ENCODE measurements at regions of chr4 and their contacts with region 1.

Region 1: DNA sequence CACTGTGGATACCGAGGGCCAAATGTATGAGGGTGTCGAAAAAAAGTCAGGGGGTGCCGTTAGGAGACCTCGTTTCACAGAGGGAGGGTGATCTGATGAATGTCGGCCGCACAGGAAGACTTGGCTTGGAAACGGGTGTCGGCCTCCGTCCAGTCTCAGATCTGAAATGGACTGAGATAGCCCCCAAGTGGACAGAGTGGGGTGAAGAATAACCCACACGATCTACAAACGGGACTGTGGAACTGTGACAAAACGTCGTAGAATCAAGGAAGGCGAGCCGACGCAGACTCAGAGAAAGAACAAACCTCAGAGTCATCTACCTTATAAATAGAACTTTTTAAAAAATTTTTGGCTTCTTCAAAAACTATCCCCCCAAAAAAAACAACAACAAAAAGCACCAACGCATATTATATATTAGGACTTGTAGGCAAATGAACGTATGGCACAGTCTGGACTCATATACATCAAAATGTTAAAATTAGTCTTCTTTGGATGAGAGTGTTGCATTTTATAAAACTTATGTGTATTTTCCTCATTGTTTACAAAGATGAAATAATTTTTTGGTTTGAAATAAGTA is 63.8 kb upstream of the IRF2 start:
- DNase-seq: peak; percentile 90
- ATAC-seq: peak; percentile 71
- H3K4me3 ChIP-seq: peak overlapping the region; percentile 74 to 98 (median 81)
- H3K4me3 Mint-ChIP-seq: peak overlapping the region; percentile 96
- H3K27ac ChIP-seq: peak overlapping the region; percentile 98
- H3K27ac Mint-ChIP-seq: peak overlapping the region; percentile 100
- H3K4me1 ChIP-seq: peaks cover 33 to 38% of the 10 kb centered on the region in 2 donors
- H3K4me1 Mint-ChIP-seq: peaks cover 42% of the 10 kb centered on the region
- H3K27me3 ChIP-seq: no peaks in the 10 kb centered on the region
- H3K27me3 Mint-ChIP-seq: no peaks in the 10 kb centered on the region
- CTCF ChIP-seq: peak; percentile 61

Region 2: DNA sequence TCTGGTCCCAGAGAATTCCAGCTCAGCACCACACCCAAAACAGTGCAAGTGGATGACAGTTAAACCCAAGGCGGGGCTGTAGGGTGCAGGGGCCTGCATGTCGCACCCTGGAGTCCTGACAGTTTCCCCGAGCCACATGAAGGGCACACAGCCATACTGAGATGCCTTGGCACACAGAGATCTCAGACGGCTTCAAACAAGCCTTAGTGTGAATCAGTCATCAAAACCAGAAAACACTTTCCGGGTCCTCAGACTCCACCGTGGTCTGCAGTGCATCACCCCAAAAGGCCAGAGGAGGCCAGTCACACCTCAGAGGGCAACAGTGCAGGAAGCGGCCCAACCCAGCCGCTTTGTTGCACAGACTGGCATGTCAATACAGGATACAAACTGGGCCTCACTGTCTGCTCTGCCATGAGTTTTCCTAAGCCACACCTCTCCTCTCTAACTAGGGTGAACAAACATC is 255.8 kb before region 1 on chr4:
- CTCF ChIA-PET with region 1: interaction called, 22 read pairs
- POLR2A ChIA-PET with region 1: interaction called, 4 read pairs
- intact Hi-C with region 1: loop called (anchors 1 kb)
- DNase-seq: peak; percentile 62
- ATAC-seq: peak; percentile 72
- H3K4me3 ChIP-seq: no peak overlapping the region
- H3K4me3 Mint-ChIP-seq: peak overlapping the region; percentile 77
- H3K27ac ChIP-seq: peak overlapping the region; percentile 28 to 73
- H3K27ac Mint-ChIP-seq: peak overlapping the region; percentile 90
- H3K4me1 ChIP-seq: peaks cover 48% of the 10 kb centered on the region in 2 donors
- H3K4me1 Mint-ChIP-seq: peaks cover 58% of the 10 kb centered on the region
- H3K27me3 ChIP-seq: no peaks in the 10 kb centered on the region
- H3K27me3 Mint-ChIP-seq: no peaks in the 10 kb centered on the region
- CTCF ChIP-seq: peak; percentile 34

Region 3: GRCh38 chr4:184384056-184384809 is 153.9 kb before region 1 on chr4:
- CTCF ChIA-PET with region 1: no interaction called
- POLR2A ChIA-PET with region 1: interaction called, 3 read pairs
- intact Hi-C with region 1: loop called (anchors 5 kb)
- DNase-seq: peak; percentile 71
- ATAC-seq: peak; percentile 57
- H3K4me3 ChIP-seq: peak overlapping the region; percentile 30 to 59 (median 50)
- H3K4me3 Mint-ChIP-seq: peak overlapping the region; percentile 81
- H3K27ac ChIP-seq: peak overlapping the region; percentile 60 to 76
- H3K27ac Mint-ChIP-seq: peak overlapping the region; percentile 85
- H3K4me1 ChIP-seq: peaks cover 79 to 88% of the 10 kb centered on the region in 2 donors
- H3K4me1 Mint-ChIP-seq: peaks cover 85% of the 10 kb centered on the region
- H3K27me3 ChIP-seq: no peaks in the 10 kb centered on the region
- H3K27me3 Mint-ChIP-seq: no peaks in the 10 kb centered on the region
- CTCF ChIP-seq: no peak

Region 4: DNA sequence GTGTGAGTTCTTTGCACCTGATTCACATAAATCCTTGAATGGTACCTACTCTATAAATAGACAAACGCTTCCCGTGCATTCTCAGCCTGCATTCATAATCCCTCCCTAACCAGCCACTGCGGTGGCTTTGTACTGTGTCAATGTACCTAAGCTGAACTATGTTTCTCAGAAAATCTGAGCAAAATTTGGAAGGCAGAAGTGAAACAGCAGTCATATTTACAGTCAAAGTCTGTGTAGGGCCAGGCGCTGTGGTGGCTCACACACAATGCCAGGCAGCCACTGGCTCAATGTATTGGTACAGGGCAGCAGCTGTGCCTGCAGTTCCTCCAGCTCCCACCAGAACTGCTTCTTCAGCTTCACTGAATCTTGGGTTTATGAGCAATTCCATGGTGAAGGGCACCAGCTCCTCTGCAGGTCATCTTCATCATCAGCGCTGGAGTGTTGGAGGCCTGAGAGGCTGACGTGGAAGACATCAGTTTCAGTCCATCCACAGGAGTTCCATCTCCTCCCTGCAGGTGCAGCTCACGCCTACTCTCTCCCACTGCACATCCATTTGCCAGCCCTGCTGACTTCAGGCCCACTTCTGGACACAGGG is 31.5 kb before region 1 on chr4:
- CTCF ChIA-PET with region 1: interaction called, 23 read pairs
- POLR2A ChIA-PET with region 1: interaction called, 10 read pairs
- intact Hi-C with region 1: loop called (anchors 1 kb)
- DNase-seq: peak; percentile 82
- ATAC-seq: peak; percentile 99
- H3K4me3 ChIP-seq: peak overlapping the region in 1 of 5 experiments; percentile 24
- H3K4me3 Mint-ChIP-seq: peak overlapping the region; percentile 61
- H3K27ac ChIP-seq: peak overlapping the region; percentile 48 to 69
- H3K27ac Mint-ChIP-seq: peak overlapping the region; percentile 81
- H3K4me1 ChIP-seq: peaks cover 43 to 48% of the 10 kb centered on the region in 2 donors
- H3K4me1 Mint-ChIP-seq: peaks cover 45% of the 10 kb centered on the region
- H3K27me3 ChIP-seq: no peaks in the 10 kb centered on the region
- H3K27me3 Mint-ChIP-seq: no peaks in the 10 kb centered on the region
- CTCF ChIP-seq: peak; percentile 73

Region 5: DNA sequence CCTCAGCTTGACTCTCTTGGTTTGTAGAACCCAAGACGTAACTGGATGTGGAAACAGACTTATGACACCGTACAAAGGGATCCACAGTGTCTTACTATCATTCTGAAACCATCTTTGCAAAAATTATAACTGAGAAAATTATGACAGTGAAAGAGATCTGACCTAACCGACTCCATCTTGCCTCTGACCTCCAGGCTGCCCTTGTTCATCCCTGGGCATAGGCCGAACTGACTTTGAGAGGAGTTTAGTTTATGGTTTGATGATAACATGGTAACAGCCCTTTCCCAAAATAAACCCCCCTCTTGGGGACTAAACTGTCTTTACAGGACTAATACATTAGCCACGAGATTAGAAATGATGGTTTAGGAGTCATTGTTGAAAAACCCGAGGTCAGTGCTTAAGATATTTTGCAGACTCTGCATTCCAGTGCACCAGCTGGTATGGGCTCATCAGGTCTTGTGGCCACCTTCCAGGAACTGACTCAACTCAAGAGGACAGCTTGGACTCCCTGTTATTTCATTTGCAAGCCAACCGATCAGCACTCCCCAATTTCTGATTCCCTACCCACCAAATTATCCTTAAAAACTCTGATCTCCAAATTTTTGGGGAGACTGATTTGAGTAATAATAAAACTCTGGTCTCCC is 61.5 kb after region 1 on chr4:
- CTCF ChIA-PET with region 1: no interaction called
- POLR2A ChIA-PET with region 1: no interaction called
- intact Hi-C with region 1: no loop called
- DNase-seq: no peak
- ATAC-seq: no peak
- H3K4me3 ChIP-seq: no peak overlapping the region
- H3K4me3 Mint-ChIP-seq: no peak overlapping the region
- H3K27ac ChIP-seq: no peak overlapping the region
- H3K27ac Mint-ChIP-seq: no peak overlapping the region
- H3K4me1 ChIP-seq: no peaks in the 10 kb centered on the region
- H3K4me1 Mint-ChIP-seq: no peaks in the 10 kb centered on the region
- H3K27me3 ChIP-seq: peaks cover 0 to 3% (median 0%) of the 10 kb centered on the region in 4 experiments
- H3K27me3 Mint-ChIP-seq: peaks cover 13% of the 10 kb centered on the region
- CTCF ChIP-seq: no peak

Region 6: DNA sequence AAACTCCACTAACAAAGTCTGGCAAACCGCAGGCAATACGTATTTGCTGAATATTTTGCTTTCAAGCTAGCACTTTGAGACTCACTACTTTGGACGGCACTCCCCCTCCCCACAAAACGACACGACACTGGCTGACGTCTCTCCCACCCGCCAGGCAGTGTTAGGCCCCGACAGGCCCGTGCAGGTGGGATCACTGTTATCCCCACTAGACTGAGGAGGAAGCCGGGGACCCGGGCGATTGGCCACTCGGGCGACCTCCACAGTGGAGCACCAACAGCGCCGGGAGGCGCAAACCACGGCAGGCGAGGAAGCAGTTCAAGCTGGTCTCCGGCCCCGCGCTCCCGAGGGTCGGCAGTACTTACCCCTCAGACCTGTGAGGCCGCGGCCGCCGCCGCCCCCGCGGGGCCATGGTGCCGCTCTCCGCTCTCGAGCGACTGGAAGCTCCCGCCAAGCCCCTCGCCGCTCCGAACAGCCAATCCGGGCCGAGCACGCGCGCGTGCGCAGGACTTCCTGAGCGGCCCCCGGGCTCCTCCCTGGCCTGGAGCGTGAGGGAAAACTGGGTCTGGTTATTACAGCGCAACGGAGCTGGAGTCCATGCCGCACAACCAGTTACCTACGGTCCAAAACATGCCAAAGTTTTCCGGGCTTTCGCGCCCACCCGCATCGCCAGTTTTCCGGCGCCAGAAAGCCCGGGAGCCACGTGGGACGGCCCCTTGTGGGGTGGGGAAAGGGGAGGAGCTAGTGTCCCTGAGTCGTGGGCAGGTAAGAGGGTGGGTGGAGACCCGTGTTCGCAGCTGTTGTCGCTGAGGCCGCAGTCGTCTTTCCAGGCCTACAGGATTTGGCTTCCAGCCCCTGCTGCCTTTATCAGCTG is 195.8 kb after region 1 on chr4 and contains the start of gene CENPU:
- CTCF ChIA-PET with region 1: no interaction called
- POLR2A ChIA-PET with region 1: no interaction called
- intact Hi-C with region 1: loop called (anchors 1 kb)
- DNase-seq: peak; percentile 96
- ATAC-seq: peak; percentile 95
- H3K4me3 ChIP-seq: peak within 1 kb of the TSS; percentile 65 to 76 (median 72)
- H3K4me3 Mint-ChIP-seq: peak within 1 kb of the TSS; percentile 93
- H3K27ac ChIP-seq: peak within 1 kb of the TSS; percentile 1 to 52
- H3K27ac Mint-ChIP-seq: peak within 1 kb of the TSS; percentile 93
- H3K4me1 ChIP-seq: peaks cover 7 to 12% of the 10 kb centered on the region in 2 donors
- H3K4me1 Mint-ChIP-seq: peaks cover 16% of the 10 kb centered on the region
- H3K27me3 ChIP-seq: no peaks in the 10 kb centered on the region
- H3K27me3 Mint-ChIP-seq: no peaks in the 10 kb centered on the region
- CTCF ChIP-seq: no peak
- total RNA-seq, gene CENPU: 1.6 and 3.2 TPM in 2 replicates